ENCODE measurements at regions of chr18 and their contacts with region 1.

Region 1: DNA sequence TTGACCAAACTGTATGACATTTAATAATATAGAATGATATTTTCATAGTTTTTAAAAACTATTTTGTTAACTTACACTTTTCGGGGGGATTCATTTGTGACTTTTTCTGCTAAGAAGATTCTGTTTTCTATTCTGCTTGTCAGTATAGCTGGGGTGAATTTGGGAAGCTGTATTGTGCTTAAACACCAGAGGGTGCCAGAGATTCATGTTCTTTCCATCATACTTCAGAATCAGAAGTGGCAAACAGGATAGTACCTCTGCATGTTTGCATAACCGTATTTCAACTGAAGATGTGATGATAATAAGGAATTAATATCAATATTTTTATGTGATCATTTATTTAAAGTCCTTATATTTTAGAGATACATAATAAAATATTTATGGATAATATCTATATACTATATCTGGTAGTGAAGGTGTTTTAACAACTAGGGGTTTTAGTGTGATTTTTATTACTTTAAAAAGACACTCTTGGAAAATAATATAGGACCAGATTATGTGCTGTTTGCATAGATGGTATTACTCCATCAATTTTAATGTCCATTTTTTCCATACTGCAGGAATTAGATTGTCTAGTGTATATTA is 81.0 kb downstream of the TAF4B start:
- DNase-seq: peak; percentile 65
- H3K4me3 Mint-ChIP-seq: no peak overlapping the region
- H3K27ac Mint-ChIP-seq: no peak overlapping the region
- H3K4me1 Mint-ChIP-seq: no peaks in the 10 kb centered on the region
- H3K27me3 Mint-ChIP-seq: no peaks in the 10 kb centered on the region
- CTCF ChIP-seq: peak; percentile 59

Region 2: DNA sequence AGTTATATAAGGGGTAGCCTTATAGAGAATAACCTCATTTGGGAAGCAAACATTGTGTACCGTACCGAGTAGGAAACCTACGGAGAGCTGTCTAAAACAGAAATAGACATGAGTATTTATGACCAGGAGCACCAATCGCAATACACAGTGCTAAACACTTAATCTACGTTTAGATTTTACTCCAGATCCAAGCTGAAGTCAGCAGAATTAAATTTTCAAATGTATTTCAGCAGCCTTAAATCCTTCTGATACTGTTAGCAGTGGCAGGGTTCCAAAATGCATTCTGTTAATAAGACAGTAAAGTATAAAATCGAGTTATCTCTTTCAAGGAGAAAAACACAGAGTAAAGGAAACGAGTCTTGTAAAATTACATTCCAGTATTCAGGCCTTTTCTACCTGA is 837.2 kb before region 1 on chr18:
- CTCF ChIA-PET with region 1: no interaction called
- POLR2A ChIA-PET with region 1: no interaction called
- intact Hi-C with region 1: no loop called
- DNase-seq: no peak
- H3K4me3 Mint-ChIP-seq: no peak overlapping the region
- H3K27ac Mint-ChIP-seq: no peak overlapping the region
- H3K4me1 Mint-ChIP-seq: no peaks in the 10 kb centered on the region
- H3K27me3 Mint-ChIP-seq: no peaks in the 10 kb centered on the region
- CTCF ChIP-seq: no peak

Region 3: DNA sequence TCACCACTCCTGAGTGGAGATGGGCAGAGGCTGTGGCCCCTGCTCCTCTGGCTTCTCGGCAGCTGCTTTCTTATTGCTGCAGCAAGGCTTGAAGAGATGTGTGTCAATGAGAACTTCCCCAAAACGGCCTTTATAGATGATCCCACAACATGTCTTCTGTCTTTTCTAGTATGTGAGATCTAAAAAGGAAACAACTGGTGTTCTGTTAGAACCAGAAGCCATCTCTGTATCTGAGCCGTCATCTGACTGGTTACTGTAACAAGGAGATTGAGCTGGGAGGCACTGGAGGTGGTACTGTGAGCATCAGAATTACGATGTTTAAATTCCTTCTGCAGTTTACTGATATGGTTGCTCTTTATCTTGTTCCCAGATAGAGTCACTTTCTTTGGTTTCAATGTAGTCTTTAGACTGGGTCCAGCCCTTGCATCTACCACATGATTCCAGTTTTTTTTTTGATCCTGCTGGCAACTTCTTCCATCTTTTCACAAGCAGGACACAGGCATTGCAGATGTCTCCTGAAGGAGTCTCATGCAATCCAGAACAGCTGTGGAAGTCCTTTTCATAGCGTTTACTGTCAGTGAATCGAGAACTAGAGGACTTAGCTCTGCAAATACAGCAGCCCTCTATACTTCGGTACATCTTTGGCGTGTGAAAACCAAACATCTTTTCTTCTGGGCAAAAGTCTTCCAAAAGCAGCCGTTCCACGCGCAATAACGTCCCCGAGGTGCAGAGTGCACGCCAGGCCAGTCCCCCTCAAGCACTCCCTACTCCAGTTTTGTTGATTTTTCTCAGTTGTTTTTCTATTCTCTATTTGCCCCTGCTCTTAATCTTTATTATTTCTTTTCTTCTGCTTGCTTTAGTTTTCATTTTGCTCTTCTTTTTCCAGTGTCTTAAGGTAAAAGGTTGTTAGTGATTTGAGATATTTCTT is 51.3 kb before region 1 on chr18:
- CTCF ChIA-PET with region 1: no interaction called
- POLR2A ChIA-PET with region 1: no interaction called
- intact Hi-C with region 1: no loop called
- DNase-seq: no peak
- H3K4me3 Mint-ChIP-seq: no peak overlapping the region
- H3K27ac Mint-ChIP-seq: no peak overlapping the region
- H3K4me1 Mint-ChIP-seq: no peaks in the 10 kb centered on the region
- H3K27me3 Mint-ChIP-seq: no peaks in the 10 kb centered on the region
- CTCF ChIP-seq: no peak

Region 4: DNA sequence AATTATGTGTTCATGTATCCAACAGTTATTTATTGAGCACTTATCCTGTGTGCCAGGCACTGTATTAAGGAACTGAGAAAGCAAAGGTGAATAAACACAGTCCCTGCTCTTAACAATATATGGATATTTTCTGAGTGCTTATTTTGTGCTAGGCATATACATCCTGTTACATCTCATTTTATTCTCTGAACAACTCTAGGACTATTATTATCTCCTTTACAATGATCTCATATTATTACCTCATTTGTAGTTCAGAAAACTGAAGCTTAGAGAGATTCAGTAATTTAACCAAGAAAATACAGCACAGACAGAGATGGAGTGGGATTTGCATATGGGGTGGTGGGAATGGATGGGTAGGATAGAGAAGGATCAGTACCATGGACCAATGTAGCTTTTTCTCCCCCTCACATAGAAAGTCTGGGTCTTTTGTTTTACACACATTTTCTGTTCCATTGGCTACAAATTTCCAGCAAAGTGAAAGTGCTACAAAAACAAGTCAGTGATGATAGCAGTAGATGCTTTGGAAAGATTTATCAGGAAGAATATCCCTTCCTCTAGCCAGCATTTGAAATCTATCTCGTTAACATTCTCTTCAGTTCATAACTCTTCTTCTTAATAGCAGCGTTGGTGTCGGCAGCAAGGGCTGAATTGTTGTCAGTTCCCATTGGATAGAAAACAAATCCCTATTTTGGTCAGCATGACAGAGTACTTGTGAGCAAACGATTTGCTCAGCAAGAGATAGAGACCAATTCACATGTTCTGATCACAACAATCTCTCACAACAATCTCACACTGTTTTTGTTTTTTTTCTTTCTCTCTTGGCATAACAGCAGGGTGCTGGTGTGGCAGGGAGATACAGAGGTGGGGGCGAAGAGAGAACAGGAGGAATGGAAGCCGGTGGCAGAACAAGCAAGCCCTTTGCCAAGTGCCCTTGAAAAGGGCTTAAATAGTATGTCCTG is 343.3 kb after region 1 on chr18:
- CTCF ChIA-PET with region 1: interaction called, 4 read pairs
- POLR2A ChIA-PET with region 1: no interaction called
- intact Hi-C with region 1: loop called (anchors 1 kb)
- DNase-seq: no peak
- H3K4me3 Mint-ChIP-seq: no peak overlapping the region
- H3K27ac Mint-ChIP-seq: no peak overlapping the region
- H3K4me1 Mint-ChIP-seq: peaks cover 5% of the 10 kb centered on the region
- H3K27me3 Mint-ChIP-seq: peaks cover 15% of the 10 kb centered on the region
- CTCF ChIP-seq: no peak

Region 5: DNA sequence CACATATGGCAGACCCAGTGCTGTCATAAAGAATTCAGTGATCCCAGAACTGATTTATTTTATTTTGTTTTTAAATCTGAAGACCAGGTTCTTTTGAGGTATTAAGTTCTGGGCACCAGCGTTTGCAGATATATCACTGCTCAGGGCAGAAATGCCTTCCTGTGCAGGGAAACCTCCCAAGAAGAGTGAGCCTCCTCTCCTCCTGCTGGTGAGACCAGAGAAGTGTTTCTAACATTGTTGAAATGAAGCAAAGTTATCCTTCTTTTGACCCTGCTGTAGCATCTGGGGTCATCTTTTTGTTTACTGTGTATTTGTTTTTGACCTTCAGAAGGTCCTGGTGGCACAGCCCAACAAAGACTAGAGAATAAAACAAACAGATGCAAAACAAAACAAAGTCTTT is 464.2 kb after region 1 on chr18:
- CTCF ChIA-PET with region 1: no interaction called
- POLR2A ChIA-PET with region 1: interaction called, 3 read pairs
- intact Hi-C with region 1: loop called (anchors 1 kb)
- DNase-seq: peak; percentile 46
- H3K4me3 Mint-ChIP-seq: no peak overlapping the region
- H3K27ac Mint-ChIP-seq: no peak overlapping the region
- H3K4me1 Mint-ChIP-seq: peaks cover 5% of the 10 kb centered on the region
- H3K27me3 Mint-ChIP-seq: no peaks in the 10 kb centered on the region
- CTCF ChIP-seq: peak; percentile 30

Region 6: GRCh38 chr18:27005589-27005988 is 698.3 kb after region 1 on chr18:
- CTCF ChIA-PET with region 1: no interaction called
- POLR2A ChIA-PET with region 1: no interaction called
- intact Hi-C with region 1: loop called (anchors 1 kb)
- DNase-seq: peak; percentile 35
- H3K4me3 Mint-ChIP-seq: no peak overlapping the region
- H3K27ac Mint-ChIP-seq: no peak overlapping the region
- H3K4me1 Mint-ChIP-seq: no peaks in the 10 kb centered on the region
- H3K27me3 Mint-ChIP-seq: peaks cover 12% of the 10 kb centered on the region
- CTCF ChIP-seq: peak; percentile 28

Measured in MCF 10A (cell line).